HepG2 (cell line): ENCODE measurements at regions of chr13 and their contacts with region 1.

Region 1: GRCh38 chr13:41019011-41019487 is at the start of gene ELF1:
- DNase-seq: peak; percentile 65
- ATAC-seq: peak; percentile 60
- H3K4me3 ChIP-seq: peak within 1 kb of the TSS; percentile 46 to 61 (median 55); a peak in 5 of 6 replicates
- H3K27ac ChIP-seq: peak within 1 kb of the TSS; percentile 87
- H3K4me1 ChIP-seq: peaks cover 92% of the 10 kb centered on the region
- H3K27me3 ChIP-seq: no peaks in the 10 kb centered on the region
- CTCF ChIP-seq: no peak
- EP300 ChIP-seq: no peak
- POLR2A ChIP-seq: peak in 1 of 2 experiments; percentile 0; a peak in 1 of 4 replicates
- RAD21 ChIP-seq: no peak
- total RNA-seq, gene ELF1: 71.5 and 91.5 TPM in 2 replicates

Region 2: GRCh38 chr13:40922437-40923040 is 96.5 kb before region 1 on chr13:
- CTCF ChIA-PET with region 1: no interaction called
- POLR2A ChIA-PET with region 1: interaction called, 5 read pairs
- in situ Hi-C with region 1: no loop called
- intact Hi-C with region 1: loop called (anchors 5 kb)
- DNase-seq: peak; percentile 10
- ATAC-seq: peak; percentile 19
- H3K4me3 ChIP-seq: no peak overlapping the region; a peak in 1 of 6 replicates
- H3K27ac ChIP-seq: no peak overlapping the region
- H3K4me1 ChIP-seq: peaks cover 27% of the 10 kb centered on the region
- H3K27me3 ChIP-seq: no peaks in the 10 kb centered on the region; a peak in 2 of 5 replicates
- CTCF ChIP-seq: no peak
- EP300 ChIP-seq: no peak
- POLR2A ChIP-seq: no peak
- RAD21 ChIP-seq: no peak

Region 3: DNA sequence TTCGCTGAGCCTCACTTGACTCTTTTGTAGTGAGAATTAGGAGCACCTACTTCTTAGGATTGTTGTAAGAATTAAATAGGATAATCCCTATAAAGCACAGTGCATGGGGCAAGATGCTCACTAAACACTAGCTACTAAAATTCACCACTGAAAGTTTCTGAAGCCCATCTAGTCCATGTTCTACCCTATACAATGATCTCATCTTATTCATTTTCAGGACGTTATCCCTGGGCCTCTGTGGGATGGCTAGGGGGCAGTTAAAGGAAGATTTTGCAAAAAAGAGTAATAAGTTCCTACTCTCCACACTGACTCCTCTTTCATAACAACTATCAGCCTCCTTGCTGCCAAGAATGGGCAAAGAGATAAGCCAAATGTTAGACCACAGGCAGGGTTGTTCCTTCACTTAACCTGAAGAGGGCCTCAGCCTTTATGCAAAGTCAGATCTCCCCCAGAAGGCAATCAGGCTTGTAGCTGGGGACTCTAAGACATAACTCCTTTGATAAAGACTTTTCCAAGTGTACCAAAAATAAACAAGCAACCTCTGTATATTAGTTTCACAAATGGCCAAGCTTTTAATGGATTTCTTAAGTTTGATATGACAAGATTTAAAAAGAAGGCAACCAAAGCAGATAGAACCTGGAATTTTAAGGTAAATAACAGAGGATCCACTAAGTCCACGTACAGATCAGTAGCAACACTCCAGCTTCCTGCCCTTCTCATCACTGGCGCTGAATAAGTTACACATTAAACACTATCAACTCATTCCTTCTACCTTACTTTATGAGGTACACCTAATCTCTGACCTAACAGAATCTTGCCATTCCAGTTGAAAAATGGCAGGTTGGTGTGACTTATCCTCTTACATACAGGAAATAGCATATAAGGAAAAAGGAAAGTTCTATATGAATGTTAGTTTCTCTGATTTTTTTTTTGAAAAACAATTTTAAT is 44.3 kb before region 1 on chr13:
- CTCF ChIA-PET with region 1: no interaction called
- POLR2A ChIA-PET with region 1: interaction called, 3 read pairs
- in situ Hi-C with region 1: no loop called
- intact Hi-C with region 1: loop called (anchors 5 kb)
- DNase-seq: peak; percentile 65
- ATAC-seq: peak; percentile 95
- H3K4me3 ChIP-seq: peak overlapping the region in 1 of 3 experiments; percentile 3; a peak in 1 of 6 replicates
- H3K27ac ChIP-seq: peak overlapping the region; percentile 57
- H3K4me1 ChIP-seq: peaks cover 70% of the 10 kb centered on the region
- H3K27me3 ChIP-seq: no peaks in the 10 kb centered on the region
- CTCF ChIP-seq: peak; percentile 63
- EP300 ChIP-seq: no peak
- POLR2A ChIP-seq: no peak
- RAD21 ChIP-seq: 0 out of 2 replicates have a peak, but pooled peaks have one; percentile 25

Region 4: GRCh38 chr13:41004875-41005693 is 14.0 kb before region 1 on chr13:
- CTCF ChIA-PET with region 1: no interaction called
- POLR2A ChIA-PET with region 1: interaction called, 22 read pairs
- in situ Hi-C with region 1: no loop called
- intact Hi-C with region 1: no loop called
- DNase-seq: no peak
- ATAC-seq: no peak
- H3K4me3 ChIP-seq: no peak overlapping the region; a peak in 1 of 6 replicates
- H3K27ac ChIP-seq: peak overlapping the region; percentile 45
- H3K4me1 ChIP-seq: peaks cover 98% of the 10 kb centered on the region
- H3K27me3 ChIP-seq: no peaks in the 10 kb centered on the region
- CTCF ChIP-seq: no peak
- EP300 ChIP-seq: peak in 1 of 2 experiments; percentile 7; a peak in 1 of 4 replicates
- POLR2A ChIP-seq: no peak
- RAD21 ChIP-seq: no peak

Region 5: GRCh38 chr13:41054212-41054877 is 35.3 kb after region 1 on chr13:
- CTCF ChIA-PET with region 1: no interaction called
- POLR2A ChIA-PET with region 1: interaction called, 35 read pairs
- in situ Hi-C with region 1: no loop called
- intact Hi-C with region 1: loop called (anchors 5 kb)
- DNase-seq: peak; percentile 53
- ATAC-seq: peak; percentile 49
- H3K4me3 ChIP-seq: 0 out of 6 replicates have a peak overlapping the region, but pooled peaks of 1 of the 3 experiments have one; percentile 12
- H3K27ac ChIP-seq: peak overlapping the region; percentile 35
- H3K4me1 ChIP-seq: peaks cover 94% of the 10 kb centered on the region
- H3K27me3 ChIP-seq: no peaks in the 10 kb centered on the region
- CTCF ChIP-seq: peak; percentile 53
- EP300 ChIP-seq: no peak
- POLR2A ChIP-seq: no peak
- RAD21 ChIP-seq: no peak

Region 6: GRCh38 chr13:41299316-41300094 is 280.5 kb after region 1 on chr13:
- CTCF ChIA-PET with region 1: no interaction called
- POLR2A ChIA-PET with region 1: no interaction called
- in situ Hi-C with region 1: no loop called
- intact Hi-C with region 1: no loop called
- DNase-seq: no peak
- ATAC-seq: no peak
- H3K4me3 ChIP-seq: no peak overlapping the region
- H3K27ac ChIP-seq: no peak overlapping the region
- H3K4me1 ChIP-seq: peaks cover 12% of the 10 kb centered on the region
- H3K27me3 ChIP-seq: peaks cover 0 to 8% of the 10 kb centered on the region in 2 experiments; a peak in 1 of 5 replicates
- CTCF ChIP-seq: no peak
- EP300 ChIP-seq: no peak
- POLR2A ChIP-seq: no peak
- RAD21 ChIP-seq: no peak